AG04449 (cell line): ENCODE measurements at regions of chr9 and their contacts with region 1.

Region 1: DNA sequence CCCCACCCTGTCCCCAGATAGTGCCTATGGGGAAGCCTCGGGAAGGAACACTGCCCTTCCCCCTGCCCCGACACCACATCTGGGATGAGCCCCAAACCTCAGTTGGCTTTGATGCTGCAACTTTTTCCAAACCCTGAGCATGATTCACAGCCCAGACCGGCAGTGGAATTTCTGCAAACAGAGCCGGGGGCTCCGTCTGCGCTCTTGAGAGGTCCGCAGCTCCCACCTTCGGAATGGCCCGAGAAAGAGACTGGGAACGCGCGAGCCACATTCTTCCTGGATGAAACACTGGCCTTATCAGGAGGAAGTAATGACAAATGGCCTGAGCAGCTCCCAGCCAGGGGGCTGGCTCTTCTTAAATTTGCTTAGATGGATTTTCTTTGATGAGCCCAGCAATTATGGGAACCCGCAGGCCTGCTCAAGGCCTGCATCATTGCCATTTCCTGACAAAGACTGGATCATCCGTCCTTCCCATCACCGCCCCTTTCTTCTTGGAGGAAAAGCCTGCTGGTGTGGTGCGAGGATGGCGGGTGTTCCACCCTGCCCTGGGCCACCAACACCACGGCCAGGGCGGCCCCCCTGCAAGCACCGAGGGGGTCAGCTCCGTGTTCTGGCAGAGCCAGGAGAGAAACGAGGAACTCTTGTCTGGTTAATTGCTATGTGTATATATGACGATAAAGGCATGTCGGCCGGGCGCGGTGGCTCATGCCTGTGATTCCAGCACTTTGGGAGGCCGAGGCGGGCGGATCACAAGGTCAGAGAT is 38.9 kb upstream of the COL5A1 start:
- DNase-seq: peak; percentile 97
- H3K4me3 ChIP-seq: no peak overlapping the region
- CTCF ChIP-seq: no peak

Region 2: GRCh38 chr9:134455934-134456739 is 146.6 kb before region 1 on chr9:
- CTCF ChIA-PET with region 1: no interaction called
- POLR2A ChIA-PET with region 1: interaction called, 11 read pairs
- DNase-seq: peak; percentile 97
- H3K4me3 ChIP-seq: 0 out of 2 replicates have a peak overlapping the region, but pooled peaks have one; percentile 8
- CTCF ChIP-seq: no peak

Region 3: DNA sequence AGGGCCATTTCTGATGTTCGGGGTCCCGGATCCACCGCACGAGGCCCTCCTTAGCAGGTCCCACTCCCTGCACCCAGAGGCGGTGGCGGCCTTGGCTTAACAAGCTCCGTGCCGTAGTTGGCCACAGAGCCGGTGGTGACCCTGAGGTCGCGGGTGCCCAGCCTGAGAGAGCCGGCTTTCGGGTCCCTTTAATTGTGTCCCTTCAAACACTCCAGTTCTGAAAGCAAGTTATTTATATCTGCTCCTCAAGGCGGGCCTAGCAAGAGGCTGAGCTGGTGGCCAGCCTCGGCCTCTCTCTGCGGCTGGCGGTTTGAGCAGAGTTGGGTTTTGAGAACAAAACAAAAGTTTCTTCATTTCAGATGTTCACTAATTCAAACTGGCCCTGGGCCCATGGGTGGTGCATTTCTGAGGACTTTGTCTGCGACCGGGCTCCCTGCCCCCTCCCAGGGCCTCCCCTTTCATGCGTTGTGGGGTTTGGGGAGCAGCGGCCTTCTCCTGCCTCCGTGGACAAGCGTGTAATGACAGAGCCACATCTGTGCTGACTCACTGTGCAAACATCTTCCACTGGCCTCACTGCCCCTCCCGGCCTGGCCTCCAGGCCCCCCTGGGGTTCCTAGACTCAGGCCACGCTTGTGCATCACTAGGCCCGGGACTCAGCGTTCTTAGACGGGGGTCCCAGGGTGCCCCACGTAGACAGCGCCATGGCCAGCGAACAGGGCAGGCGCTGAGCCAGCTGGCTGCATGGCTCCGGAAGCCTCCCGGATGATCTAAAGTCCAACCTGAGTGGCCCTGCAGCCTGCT is 10.5 kb before region 1 on chr9:
- CTCF ChIA-PET with region 1: no interaction called
- POLR2A ChIA-PET with region 1: interaction called, 12 read pairs
- DNase-seq: no peak
- H3K4me3 ChIP-seq: peak overlapping the region; percentile 15
- CTCF ChIP-seq: no peak

Region 4: DNA sequence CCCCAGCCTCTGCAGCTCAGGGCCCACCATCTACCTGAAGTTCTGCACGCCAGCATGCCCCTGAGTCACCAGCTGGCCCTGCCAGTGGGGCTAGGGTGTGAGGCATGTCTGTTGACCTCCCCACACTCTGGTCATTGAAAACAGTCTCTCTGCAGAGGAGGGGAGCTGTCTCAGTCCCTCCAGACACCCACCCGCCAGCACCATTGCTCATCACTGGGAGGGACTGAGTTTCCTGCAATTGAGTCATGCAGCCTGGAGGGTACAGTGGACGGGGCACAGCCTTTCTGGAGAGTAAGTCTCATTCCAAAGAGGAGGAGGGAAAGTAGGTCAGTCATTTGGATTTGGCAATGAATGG is 22.1 kb after region 1 on chr9:
- CTCF ChIA-PET with region 1: interaction called, 4 read pairs
- POLR2A ChIA-PET with region 1: interaction called, 19 read pairs
- DNase-seq: peak; percentile 71
- H3K4me3 ChIP-seq: no peak overlapping the region
- CTCF ChIP-seq: no peak

Region 5: DNA sequence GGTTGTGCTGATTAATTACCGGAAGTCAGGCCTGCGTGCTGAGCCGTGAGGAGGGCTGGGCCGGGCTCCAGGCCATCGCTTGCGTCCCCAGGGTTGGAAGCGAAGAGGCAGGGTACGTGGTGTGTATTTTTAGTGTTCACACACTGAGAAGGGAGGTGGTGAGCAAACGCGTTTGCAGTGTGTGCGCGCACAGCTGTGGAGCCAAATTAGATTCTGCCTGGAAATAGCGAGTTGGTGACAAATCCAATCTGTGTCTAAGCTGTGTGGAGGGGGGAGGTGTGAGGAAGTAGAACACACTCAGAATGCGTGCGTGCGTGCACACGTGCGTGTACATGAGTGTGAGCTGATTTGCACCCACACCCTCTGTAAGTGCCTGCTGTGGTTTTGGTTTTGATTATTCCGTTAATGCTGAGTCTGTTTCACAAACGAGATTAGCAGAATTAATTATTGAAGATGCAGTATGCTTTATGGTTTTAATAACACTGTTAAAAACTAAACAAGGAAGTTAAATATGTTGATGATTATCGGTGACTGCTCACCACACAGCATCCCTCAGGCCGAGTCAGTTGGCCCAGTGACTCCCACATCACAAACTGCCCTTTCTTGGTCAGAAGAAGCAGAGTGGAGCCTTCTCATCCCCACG is 166.1 kb after region 1 on chr9:
- CTCF ChIA-PET with region 1: no interaction called
- POLR2A ChIA-PET with region 1: no interaction called
- DNase-seq: no peak
- H3K4me3 ChIP-seq: no peak overlapping the region
- CTCF ChIP-seq: no peak